ENCODE measurements at regions of chr11 and their contacts with region 1.

Region 1: GRCh38 chr11:108616567-108616966 is 23.0 kb upstream of the EXPH5 start:
- DNase-seq: peak; percentile 96
- H3K4me3 Mint-ChIP-seq: no peak overlapping the region
- H3K27ac Mint-ChIP-seq: peak overlapping the region; percentile 91
- H3K4me1 Mint-ChIP-seq: peaks cover 14% of the 10 kb centered on the region
- H3K27me3 Mint-ChIP-seq: no peaks in the 10 kb centered on the region
- CTCF ChIP-seq: no peak

Region 2: DNA sequence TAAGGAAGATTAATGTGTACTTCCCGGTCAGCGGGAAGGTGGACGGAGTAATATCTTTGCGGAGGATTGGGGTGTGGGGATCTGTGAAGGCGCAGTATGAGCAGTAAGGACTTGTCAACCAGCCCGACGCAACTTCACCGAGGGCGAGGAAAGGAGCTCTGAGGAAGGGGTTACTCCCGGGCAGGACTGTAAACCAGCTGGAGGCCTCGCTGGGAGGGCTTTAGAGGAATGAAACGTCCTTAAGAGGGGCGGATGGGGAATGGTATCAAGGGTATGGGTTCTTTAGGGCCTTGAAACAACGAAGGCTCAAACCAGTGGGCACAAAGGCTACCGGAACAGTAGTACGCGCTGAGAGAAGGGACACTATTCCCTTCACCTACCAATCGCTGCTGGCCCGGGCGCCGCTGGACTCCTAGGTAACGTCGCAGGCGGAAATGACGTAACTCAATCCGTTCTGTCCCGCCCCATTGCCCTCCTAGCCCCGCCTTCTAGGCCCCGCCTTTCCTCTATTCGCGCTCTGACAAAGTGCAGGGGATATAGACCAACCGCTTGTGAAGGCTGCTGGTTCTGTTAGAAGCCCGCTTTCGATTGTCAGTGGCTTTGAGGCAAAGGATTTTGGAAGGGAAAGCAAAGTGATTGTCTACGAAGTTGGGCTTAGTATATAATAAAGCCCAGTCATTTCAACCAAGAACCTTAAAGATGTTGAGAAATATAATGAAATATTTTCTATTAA is 149.3 kb before region 1 on chr11 and contains the start of gene C11orf65:
- CTCF ChIA-PET with region 1: interaction called, 4 read pairs
- POLR2A ChIA-PET with region 1: interaction called, 10 read pairs
- intact Hi-C with region 1: no loop called
- DNase-seq: peak; percentile 98
- H3K4me3 Mint-ChIP-seq: peak within 1 kb of the TSS; percentile 93
- H3K27ac Mint-ChIP-seq: peak within 1 kb of the TSS; percentile 100
- H3K4me1 Mint-ChIP-seq: peaks cover 11% of the 10 kb centered on the region
- H3K27me3 Mint-ChIP-seq: no peaks in the 10 kb centered on the region
- CTCF ChIP-seq: no peak
- total RNA-seq, gene C11orf65: 1.4 and 1.5 TPM in 2 replicates